ENCODE measurements at regions of chr14 and their contacts with region 1.

Region 1: GRCh38 chr14:100067971-100068959 is 3.0 kb downstream of the EVL start:
- DNase-seq: peak; percentile 73
- H3K4me3 Mint-ChIP-seq: no peak overlapping the region
- H3K27ac Mint-ChIP-seq: peak overlapping the region; percentile 78
- H3K4me1 Mint-ChIP-seq: peaks cover 29% of the 10 kb centered on the region
- H3K27me3 Mint-ChIP-seq: no peaks in the 10 kb centered on the region
- CTCF ChIP-seq: no peak

Region 2: GRCh38 chr14:99936747-99937474 is 131.4 kb before region 1 on chr14:
- CTCF ChIA-PET with region 1: no interaction called
- POLR2A ChIA-PET with region 1: no interaction called
- intact Hi-C with region 1: no loop called
- DNase-seq: no peak
- H3K4me3 Mint-ChIP-seq: no peak overlapping the region
- H3K27ac Mint-ChIP-seq: no peak overlapping the region
- H3K4me1 Mint-ChIP-seq: no peaks in the 10 kb centered on the region
- H3K27me3 Mint-ChIP-seq: no peaks in the 10 kb centered on the region
- CTCF ChIP-seq: no peak

Region 3: DNA sequence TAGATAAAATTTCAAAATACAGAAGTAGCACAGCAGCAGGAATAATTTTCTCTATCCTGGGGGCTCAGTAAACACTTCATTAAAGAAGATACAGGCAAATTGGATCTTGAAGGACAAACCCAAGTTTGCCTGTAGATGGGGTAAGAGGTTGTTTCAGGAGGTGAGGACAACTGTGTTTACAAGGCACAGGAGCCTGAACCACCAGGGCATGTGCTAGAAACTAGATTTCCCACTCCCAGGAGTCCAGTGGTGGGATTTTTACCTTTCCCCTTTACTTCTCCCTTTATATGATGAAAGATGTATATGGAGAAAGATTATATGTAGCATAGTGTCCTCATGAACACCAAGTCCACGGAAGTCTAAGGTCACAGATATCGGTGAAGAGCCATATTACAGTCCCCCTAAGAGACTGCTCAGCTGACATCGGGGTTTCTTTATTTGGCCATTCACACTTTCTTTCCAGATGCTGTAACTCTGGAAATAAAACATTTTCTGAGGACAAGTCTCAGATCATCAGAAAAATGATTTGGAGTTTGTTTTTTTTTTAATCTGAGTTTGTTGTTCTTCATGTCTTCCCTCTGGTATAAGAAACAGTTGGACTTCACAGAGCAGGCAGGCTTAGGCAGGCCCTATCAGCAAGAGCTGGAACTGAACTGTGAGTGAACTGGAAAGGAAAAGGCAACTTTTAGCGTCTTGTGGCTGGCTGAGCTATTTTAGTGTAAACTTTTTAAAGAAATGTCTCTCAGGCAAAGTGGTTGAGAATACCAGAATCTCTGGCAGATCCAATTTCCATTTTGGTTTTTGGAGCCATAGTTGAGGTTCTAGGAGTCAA is 11.1 kb before region 1 on chr14:
- CTCF ChIA-PET with region 1: interaction called, 11 read pairs
- POLR2A ChIA-PET with region 1: interaction called, 3 read pairs
- intact Hi-C with region 1: no loop called
- DNase-seq: peak; percentile 33
- H3K4me3 Mint-ChIP-seq: no peak overlapping the region
- H3K27ac Mint-ChIP-seq: peak overlapping the region; percentile 82
- H3K4me1 Mint-ChIP-seq: peaks cover 14% of the 10 kb centered on the region
- H3K27me3 Mint-ChIP-seq: no peaks in the 10 kb centered on the region
- CTCF ChIP-seq: no peak

Region 4: DNA sequence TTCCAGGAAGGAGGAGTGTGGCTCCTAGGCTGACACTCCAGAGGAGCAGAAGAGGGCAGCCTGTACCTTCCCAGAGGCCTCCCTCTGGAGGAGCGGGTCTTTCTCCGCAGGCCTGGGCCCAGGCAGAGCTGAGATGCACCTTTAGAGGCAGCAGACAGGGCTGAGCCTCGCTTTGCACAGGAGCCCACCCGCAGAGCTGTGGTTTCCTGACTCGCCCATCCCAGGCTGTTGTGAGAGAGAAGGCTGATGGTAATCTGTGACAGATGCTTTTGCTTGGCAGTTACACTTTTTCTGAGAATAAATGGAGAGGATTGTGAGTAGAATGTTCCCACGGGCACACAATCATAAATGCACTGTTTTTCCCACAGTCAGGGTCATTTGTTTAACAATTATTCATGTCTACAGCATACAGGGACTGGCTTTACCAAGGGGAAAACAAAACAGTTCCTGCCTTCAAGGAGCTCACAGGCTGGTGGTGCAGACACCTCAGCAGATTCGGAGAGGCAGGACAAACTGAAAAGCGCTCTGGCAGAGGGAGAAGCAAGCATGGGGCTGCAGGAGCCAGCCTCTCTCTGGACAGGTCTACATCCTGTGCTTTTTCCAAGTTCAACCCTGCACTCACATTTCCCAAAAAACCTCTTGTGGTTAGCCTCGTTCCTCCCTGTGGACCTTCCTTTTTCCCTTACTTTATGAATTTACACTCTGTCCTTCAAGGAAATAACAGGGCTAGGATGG is 10.9 kb after region 1 on chr14:
- CTCF ChIA-PET with region 1: interaction called, 10 read pairs
- POLR2A ChIA-PET with region 1: interaction called, 5 read pairs
- intact Hi-C with region 1: no loop called
- DNase-seq: peak; percentile 47
- H3K4me3 Mint-ChIP-seq: no peak overlapping the region
- H3K27ac Mint-ChIP-seq: no peak overlapping the region
- H3K4me1 Mint-ChIP-seq: peaks cover 31% of the 10 kb centered on the region
- H3K27me3 Mint-ChIP-seq: no peaks in the 10 kb centered on the region
- CTCF ChIP-seq: no peak

Region 5: GRCh38 chr14:100096570-100096971 is 28.3 kb after region 1 on chr14:
- CTCF ChIA-PET with region 1: interaction called, 15 read pairs
- POLR2A ChIA-PET with region 1: interaction called, 3 read pairs
- intact Hi-C with region 1: loop called (anchors 1 kb)
- DNase-seq: peak; percentile 86
- H3K4me3 Mint-ChIP-seq: no peak overlapping the region
- H3K27ac Mint-ChIP-seq: peak overlapping the region; percentile 81
- H3K4me1 Mint-ChIP-seq: peaks cover 40% of the 10 kb centered on the region
- H3K27me3 Mint-ChIP-seq: no peaks in the 10 kb centered on the region
- CTCF ChIP-seq: no peak

Region 6: GRCh38 chr14:100155042-100155846 is 87.0 kb after region 1 on chr14:
- CTCF ChIA-PET with region 1: interaction called, 14 read pairs
- POLR2A ChIA-PET with region 1: interaction called, 3 read pairs
- intact Hi-C with region 1: loop called (anchors 1 kb)
- DNase-seq: peak; percentile 45
- H3K4me3 Mint-ChIP-seq: no peak overlapping the region
- H3K27ac Mint-ChIP-seq: no peak overlapping the region
- H3K4me1 Mint-ChIP-seq: no peaks in the 10 kb centered on the region
- H3K27me3 Mint-ChIP-seq: no peaks in the 10 kb centered on the region
- CTCF ChIP-seq: peak; percentile 71

Region 7: DNA sequence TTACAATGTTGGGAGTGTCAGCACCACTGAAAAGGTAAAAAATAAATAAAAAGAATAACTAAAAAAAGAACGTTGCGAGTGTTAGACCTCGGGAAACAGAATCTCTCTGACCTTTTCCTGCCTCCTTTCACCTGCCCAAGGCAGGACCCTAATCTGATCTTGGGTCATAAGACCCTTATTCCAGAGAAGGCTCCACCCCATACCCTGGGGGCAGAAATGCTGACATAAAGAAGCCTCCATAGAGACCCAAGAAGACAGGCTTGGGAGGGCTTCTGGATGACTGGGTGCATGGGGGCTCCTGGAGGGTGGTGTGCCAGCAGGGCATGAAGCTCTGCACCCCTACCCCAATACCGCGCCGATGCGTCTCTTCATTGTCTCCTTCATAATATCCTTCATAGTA is 137.9 kb after region 1 on chr14:
- CTCF ChIA-PET with region 1: no interaction called
- POLR2A ChIA-PET with region 1: no interaction called
- intact Hi-C with region 1: no loop called
- DNase-seq: no peak
- H3K4me3 Mint-ChIP-seq: no peak overlapping the region
- H3K27ac Mint-ChIP-seq: no peak overlapping the region
- H3K4me1 Mint-ChIP-seq: no peaks in the 10 kb centered on the region
- H3K27me3 Mint-ChIP-seq: no peaks in the 10 kb centered on the region
- CTCF ChIP-seq: no peak

Measured in MCF 10A (cell line).